Psoas muscle (tissue), 8 donors: ENCODE measurements at regions of chr5 and their contacts with region 1.

Region 1: DNA sequence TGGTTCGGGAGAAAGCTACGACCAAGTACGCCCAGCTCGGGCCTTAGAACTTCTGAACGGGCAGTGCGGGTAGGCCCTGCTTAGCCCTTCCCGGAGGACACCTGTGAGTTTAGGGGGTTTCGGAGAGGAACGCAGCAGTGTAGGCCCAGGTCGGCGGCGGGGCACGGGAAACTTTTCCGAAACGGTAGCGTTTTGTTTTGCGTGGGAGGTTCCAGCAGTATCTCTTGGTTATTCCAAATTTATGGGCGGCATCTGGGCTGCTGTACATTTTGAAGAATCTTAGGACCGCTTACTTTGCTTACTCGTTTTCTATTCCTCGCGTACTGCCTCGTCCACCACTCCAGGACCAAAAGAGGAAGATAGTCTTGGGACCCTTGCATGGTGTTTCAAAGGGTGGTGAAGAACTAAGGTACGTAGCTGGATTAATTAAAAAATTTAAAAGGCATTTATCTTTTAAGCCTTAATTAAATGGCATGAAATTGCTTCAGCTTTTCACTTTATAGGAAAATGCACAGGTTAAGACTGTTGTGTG is 492 bp downstream of the TENT2 start:
- DNase-seq: no peak
- ATAC-seq: peak in 3 of 4 donors; percentile 15 to 79 (median 18)
- H3K4me3 ChIP-seq: peak overlapping the region; percentile 84
- H3K27ac ChIP-seq: peak overlapping the region; percentile 95
- H3K4me1 ChIP-seq: peaks cover 12% of the 10 kb centered on the region
- H3K27me3 ChIP-seq: no peaks in the 10 kb centered on the region
- CTCF ChIP-seq: no peak

Region 2: GRCh38 chr5:79508354-79508753 is 104.4 kb before region 1 on chr5:
- intact Hi-C with region 1: no loop called
- DNase-seq: no peak
- ATAC-seq: peak in 3 of 4 donors; percentile 37 to 70 (median 69)
- H3K4me3 ChIP-seq: peak overlapping the region; percentile 82
- H3K27ac ChIP-seq: peak overlapping the region; percentile 95
- H3K4me1 ChIP-seq: peaks cover 36% of the 10 kb centered on the region
- H3K27me3 ChIP-seq: no peaks in the 10 kb centered on the region
- CTCF ChIP-seq: no peak

Region 3: DNA sequence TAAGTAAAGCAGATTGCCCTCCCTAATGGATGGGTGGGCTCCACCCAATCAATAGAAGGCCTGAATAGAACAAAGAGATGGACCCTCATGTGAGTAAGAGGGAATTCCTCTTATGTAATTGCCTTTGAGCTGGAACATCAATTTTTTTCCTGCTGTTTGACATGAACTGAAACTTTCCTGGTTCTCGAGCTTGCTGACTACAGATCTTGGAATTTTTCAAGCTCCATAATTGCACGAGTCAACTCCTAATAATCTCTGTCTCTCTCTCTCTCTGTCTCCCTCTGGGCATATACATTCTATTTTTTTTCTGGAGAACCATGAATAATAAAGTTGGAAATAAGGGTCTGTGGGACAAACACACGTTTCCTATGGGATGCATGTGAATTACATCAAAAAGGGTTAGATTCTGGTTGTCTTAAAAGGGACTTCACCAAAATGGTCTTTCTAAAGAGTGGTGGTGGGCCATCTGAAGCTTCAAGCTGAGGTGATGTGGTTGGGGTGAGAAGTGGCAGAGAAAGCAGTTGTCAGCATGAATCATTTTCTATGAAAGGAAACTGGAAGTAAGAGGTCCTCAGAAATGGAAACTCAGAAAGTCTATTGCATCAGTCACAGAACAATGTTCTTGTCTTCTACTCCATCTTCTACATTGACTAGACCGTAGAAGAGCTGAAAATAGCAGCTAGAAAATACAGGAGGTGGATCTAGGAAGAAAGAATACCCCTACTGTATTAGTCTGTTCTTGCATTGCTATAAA is 51.8 kb before region 1 on chr5:
- intact Hi-C with region 1: loop called in 1 of 2 experiments (anchors 5 kb)
- DNase-seq: no peak
- ATAC-seq: peak; percentile 51 to 85 (median 74)
- H3K4me3 ChIP-seq: no peak overlapping the region
- H3K27ac ChIP-seq: peak overlapping the region; percentile 38
- H3K4me1 ChIP-seq: peaks cover 17% of the 10 kb centered on the region
- H3K27me3 ChIP-seq: no peaks in the 10 kb centered on the region
- CTCF ChIP-seq: no peak

Region 4: DNA sequence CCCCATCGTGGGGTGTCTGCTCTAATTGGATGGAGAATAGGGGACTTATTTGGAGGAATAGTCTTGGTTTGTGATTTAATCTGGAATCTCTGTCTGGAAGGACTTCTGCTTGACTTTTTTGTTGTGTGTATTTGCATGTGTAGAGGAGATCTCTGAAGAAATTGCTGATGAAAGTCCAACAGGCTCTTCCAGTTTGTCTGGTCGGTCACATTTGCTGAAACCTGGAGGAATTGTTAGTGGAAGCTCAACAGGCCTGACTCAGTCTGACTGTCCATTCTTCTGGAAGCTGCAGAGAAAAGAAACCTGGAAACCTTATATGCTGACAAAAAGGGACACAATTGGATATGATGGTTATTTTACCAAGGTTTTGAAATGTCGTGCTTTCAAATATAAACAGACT is 33.9 kb before region 1 on chr5:
- intact Hi-C with region 1: loop called in 1 of 2 experiments (anchors 5 kb)
- DNase-seq: no peak
- ATAC-seq: no peak
- H3K4me3 ChIP-seq: no peak overlapping the region
- H3K27ac ChIP-seq: no peak overlapping the region
- H3K4me1 ChIP-seq: peaks cover 7% of the 10 kb centered on the region
- H3K27me3 ChIP-seq: no peaks in the 10 kb centered on the region
- CTCF ChIP-seq: no peak